A673 (cell line): ENCODE measurements at regions of chr6 and their contacts with region 1.

Region 1: DNA sequence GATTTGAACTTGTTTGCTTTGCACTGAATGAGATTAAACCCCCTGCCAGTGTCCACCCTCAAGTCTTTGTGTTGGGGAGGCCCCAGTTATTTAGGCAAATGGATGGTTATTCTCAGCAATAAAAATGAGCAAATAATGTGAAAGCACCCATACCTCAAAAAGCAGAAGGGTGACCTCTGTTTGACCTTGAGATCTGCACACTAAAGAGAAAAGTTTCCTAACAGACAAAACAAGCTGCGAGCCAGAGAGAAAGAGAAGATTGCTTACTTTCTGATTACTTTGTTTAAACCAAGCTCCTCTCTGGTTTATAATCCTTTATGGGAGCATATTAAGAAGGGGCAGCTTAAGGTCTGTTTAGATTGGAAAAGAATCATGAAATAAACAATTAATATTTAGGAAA is 30.4 kb upstream of the TRERF1 start:
- DNase-seq: no peak
- H3K4me3 ChIP-seq: no peak overlapping the region
- H3K27ac ChIP-seq: no peak overlapping the region
- H3K4me1 ChIP-seq: no peaks in the 10 kb centered on the region
- H3K27me3 ChIP-seq: no peaks in the 10 kb centered on the region
- CTCF ChIP-seq: no peak

Region 2: DNA sequence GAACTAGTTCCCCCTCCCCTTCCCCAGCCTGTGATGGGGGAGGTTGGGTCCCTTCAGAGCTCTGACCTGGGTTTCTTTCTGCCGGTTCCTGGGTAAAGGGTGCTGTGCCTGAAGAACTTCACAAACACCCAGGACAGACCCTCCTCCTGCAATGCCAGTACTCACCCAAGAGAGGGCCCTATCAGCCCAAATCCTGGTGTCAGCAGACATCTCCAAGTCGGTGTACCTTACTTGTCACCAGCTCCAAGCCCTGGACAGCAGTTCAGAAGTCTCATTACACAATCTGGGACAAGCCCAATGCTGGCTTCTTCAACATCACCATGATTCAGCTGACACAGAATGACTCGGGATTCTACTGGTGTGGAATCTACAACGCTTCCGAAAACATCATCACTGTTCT is 1253.6 kb before region 1 on chr6:
- CTCF ChIA-PET with region 1: no interaction called
- POLR2A ChIA-PET with region 1: interaction called, 11 read pairs
- intact Hi-C with region 1: no loop called
- DNase-seq: peak; percentile 56
- H3K4me3 ChIP-seq: no peak overlapping the region
- H3K27ac ChIP-seq: no peak overlapping the region
- H3K4me1 ChIP-seq: no peaks in the 10 kb centered on the region
- H3K27me3 ChIP-seq: no peaks in the 10 kb centered on the region
- CTCF ChIP-seq: peak; percentile 56